A673 (cell line): ENCODE measurements at regions of chr4 and their contacts with region 1.

Region 1: GRCh38 chr4:39044364-39044955 is 12.3 kb upstream of the TMEM156 start:
- DNase-seq: peak; percentile 89
- H3K4me3 ChIP-seq: peak overlapping the region; percentile 70
- H3K27ac ChIP-seq: peak overlapping the region; percentile 66
- H3K4me1 ChIP-seq: peaks cover 13% of the 10 kb centered on the region
- H3K27me3 ChIP-seq: no peaks in the 10 kb centered on the region
- CTCF ChIP-seq: no peak

Region 2: DNA sequence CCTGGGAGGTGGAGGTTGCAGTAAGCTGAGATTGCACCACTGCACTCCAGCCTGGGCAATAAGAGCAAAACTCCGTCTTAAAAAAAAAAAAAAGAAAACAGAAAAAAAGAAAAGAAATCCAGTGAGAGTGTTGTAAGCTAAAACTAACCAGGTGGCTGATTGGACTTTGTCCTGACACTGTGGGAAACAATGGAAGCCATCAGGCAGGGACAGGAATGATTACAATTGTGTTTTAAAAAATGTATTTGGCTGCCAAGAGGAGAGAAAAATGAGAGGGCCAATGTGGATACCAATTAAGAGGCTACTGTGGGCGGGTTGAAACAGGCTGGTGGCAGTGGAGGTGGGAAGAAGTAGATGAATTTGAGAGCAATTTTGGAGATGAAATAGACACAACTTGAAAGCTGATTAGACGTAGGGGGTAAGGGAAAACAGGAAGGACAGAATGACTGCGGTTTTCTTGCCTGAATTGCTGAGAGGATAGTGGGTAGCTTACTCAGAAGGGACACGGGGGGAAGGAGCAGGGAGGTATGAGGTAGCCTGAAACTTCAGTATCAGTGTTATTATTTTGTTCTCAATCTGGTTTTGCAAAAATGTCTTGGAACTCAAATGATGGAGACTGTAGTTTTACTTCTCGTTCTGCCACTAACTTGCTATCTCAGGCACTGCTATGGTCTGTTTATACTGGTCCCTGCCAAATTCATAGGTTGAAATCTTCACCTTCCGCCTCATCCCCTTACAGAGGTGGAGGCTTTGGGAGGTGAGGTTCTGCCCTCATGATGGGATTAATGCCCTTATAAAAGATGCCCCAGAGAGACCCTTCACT is 1245.1 kb after region 1 on chr4:
- CTCF ChIA-PET with region 1: no interaction called
- POLR2A ChIA-PET with region 1: interaction called, 20 read pairs
- intact Hi-C with region 1: no loop called
- DNase-seq: peak; percentile 33
- H3K4me3 ChIP-seq: no peak overlapping the region
- H3K27ac ChIP-seq: no peak overlapping the region
- H3K4me1 ChIP-seq: peaks cover 3% of the 10 kb centered on the region
- H3K27me3 ChIP-seq: no peaks in the 10 kb centered on the region
- CTCF ChIP-seq: no peak